ENCODE measurements at regions of chr1 and their contacts with region 1.

Region 1: DNA sequence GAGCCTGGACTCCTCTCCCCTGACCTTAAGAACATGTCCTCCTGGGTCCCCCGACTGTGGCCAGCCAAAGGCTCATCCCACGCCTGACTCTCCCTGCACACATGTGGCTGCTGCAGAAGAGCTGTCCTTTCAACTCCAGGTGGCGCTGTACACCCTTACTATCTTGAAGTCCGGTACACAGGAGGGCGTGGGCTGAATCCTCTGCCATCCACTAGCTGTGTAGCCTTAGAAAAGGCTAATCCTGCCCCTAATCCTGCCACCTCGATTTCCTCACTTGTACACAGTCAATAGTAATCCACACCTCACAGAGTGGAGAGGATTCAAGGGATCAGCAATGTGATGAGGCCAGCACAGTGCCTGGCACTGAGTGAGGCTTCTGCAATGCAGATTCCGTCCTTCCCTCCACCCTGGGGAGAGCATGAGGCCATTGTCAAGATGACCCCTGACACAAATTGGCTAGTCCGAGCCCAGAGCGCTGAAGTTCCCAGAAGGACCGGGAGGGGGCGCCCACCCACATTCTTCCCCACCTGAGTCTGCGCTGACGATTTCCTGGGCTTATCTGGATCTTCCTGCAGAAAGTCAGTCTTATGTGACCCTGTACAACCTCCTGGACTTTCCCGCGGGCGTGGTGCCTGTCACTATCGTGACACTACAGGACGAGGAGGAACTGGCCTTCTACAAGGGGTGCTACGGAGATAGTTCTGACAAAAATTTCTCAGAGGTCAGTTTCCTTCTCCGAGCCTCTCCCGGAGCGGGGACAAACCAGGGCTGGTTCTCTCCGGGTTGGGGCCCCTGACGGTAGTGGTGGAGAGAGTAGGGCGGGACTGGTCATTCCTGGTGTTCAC is 47.1 kb upstream of the DMBX1 start:
- DNase-seq: no peak
- H3K4me3 ChIP-seq: peak overlapping the region; percentile 41
- H3K27me3 ChIP-seq: peaks cover 10% of the 10 kb centered on the region
- CTCF ChIP-seq: peak; percentile 93

Region 2: GRCh38 chr1:46425726-46426125 is 16.8 kb before region 1 on chr1:
- CTCF ChIA-PET with region 1: interaction called, 44 read pairs
- POLR2A ChIA-PET with region 1: no interaction called
- DNase-seq: no peak
- H3K4me3 ChIP-seq: no peak overlapping the region
- H3K27me3 ChIP-seq: peaks cover 2% of the 10 kb centered on the region
- CTCF ChIP-seq: no peak

Region 3: DNA sequence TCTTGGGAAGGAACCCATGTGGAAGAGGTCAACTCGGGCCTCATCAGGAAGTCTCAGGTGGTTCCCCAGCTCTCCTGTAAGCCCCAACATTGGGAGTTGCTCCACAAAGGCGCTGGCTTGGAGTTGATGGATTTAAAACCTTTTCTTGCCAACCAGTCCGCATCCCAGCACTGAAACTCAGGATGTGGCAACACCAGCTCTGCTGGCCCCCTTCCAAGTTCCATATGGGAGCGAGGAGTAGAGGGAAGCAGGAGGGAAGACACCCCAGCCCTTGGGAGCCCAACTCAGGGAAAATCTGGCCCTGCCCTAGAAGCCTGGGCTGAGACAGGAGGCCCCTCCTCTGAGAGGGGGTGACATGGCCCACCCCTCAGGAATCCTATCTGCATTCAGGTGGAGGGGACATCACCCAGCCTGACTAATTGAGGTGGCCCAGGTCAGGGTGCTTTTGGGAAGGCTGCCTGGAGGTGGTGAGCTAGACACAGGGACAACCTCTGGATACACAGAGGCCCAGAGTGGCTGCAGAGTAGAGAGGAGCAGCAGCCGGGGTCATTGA is 13.9 kb after region 1 on chr1:
- CTCF ChIA-PET with region 1: interaction called, 19 read pairs
- POLR2A ChIA-PET with region 1: no interaction called
- DNase-seq: no peak
- H3K4me3 ChIP-seq: no peak overlapping the region
- H3K27me3 ChIP-seq: peaks cover 27% of the 10 kb centered on the region
- CTCF ChIP-seq: no peak

Region 4: GRCh38 chr1:46477153-46477929 is 34.8 kb after region 1 on chr1:
- CTCF ChIA-PET with region 1: interaction called, 10 read pairs
- POLR2A ChIA-PET with region 1: no interaction called
- DNase-seq: no peak
- H3K4me3 ChIP-seq: no peak overlapping the region
- H3K27me3 ChIP-seq: peaks cover 35% of the 10 kb centered on the region
- CTCF ChIP-seq: peak; percentile 95

Region 5: GRCh38 chr1:46527474-46528296 is 85.1 kb after region 1 on chr1:
- CTCF ChIA-PET with region 1: interaction called, 139 read pairs
- POLR2A ChIA-PET with region 1: no interaction called
- DNase-seq: no peak
- H3K4me3 ChIP-seq: no peak overlapping the region
- H3K27me3 ChIP-seq: peaks cover 35% of the 10 kb centered on the region
- CTCF ChIP-seq: peak; percentile 97

Region 6: DNA sequence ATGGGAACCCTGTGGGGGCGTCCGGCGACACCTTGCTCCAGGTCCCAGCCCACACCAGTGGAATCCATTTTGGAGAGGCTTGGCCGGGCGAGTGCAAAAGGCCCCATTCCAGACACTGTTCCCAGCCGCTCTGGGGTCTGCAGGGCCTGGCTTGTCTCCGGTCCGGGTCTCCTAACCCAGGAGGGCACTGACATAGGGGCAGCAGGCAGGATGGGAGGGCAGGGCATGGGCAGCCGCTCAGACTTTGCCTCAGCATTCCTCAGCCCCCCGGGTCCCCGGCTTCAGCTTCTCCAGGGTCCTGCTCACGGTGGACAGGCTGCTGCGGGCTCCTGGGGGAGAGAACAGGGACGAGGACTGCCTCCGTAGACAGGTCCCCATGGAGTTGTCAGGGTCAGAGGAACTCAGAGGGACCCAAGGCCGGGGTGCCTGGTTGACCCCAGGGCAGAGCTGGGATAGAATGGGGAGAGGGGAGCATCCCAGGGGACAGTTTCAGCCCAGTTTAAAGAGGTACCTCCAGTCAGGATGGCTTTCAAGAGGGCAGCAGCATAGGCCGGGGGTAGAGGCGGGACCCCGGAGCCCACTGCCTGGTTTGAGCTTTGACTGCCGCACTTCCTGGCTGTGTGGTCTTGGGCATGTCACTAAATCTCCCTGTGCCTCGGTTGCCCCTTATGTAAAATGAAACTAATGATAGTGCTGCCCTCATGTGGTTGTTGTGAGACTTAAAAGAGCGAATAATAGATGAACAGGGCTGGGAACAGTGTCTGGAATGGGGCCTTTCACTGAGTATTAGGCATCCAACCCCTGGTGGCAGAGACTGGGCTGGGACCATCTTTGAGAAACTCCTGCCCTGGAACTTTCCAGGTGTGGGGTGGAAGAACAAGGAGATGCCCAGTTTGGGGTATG is 105.2 kb after region 1 on chr1:
- CTCF ChIA-PET with region 1: interaction called, 19 read pairs
- POLR2A ChIA-PET with region 1: no interaction called
- DNase-seq: no peak
- H3K4me3 ChIP-seq: no peak overlapping the region
- H3K27me3 ChIP-seq: peaks cover 32% of the 10 kb centered on the region
- CTCF ChIP-seq: peak; percentile 53